Calu3 (cell line): ENCODE measurements at regions of chr14 and their contacts with region 1.

Region 1: DNA sequence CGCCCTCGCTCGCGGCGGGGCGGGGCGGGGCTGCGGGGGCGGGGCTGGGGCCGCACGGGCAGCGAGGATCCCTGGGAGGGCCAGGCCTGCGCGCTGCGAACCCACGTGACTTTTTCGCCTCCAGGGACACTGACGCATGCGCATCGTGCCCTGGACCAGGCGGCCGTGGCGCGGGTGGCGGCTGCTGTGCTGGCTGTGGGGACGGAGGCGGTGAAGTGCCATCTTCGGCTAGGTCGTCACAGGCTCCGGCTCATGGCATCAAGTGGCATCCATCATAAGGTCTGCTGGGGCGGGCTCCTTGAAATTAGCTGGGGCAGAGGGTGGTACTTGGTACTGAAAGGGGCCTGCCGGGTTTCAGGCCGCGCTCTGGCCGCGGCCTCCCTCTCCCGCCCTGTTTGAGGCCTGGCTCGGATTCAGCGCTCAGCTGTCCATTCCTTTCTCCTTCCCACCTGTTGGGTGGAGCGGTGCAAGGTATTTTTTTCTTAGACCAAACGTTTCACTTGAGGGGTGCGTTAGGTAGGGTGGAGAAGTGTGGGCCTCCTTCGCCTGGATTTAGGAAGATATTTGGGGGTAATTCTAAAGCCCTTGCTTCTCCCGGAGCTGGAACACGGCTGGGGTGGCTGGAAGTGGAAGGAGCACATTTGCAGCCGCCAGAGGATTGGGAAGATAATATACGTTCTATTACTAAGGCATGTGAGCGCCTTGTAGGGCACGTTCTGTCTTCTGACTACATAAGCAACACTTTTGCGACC is at the start of gene PRPF39:
- DNase-seq: peak; percentile 96
- H3K4me3 Mint-ChIP-seq: peak within 1 kb of the TSS; percentile 96
- H3K27ac Mint-ChIP-seq: peak within 1 kb of the TSS; percentile 87
- H3K4me1 Mint-ChIP-seq: peaks cover 34% of the 10 kb centered on the region
- H3K27me3 Mint-ChIP-seq: no peaks in the 10 kb centered on the region
- CTCF ChIP-seq: no peak
- total RNA-seq, gene PRPF39: 34.2 and 35.8 TPM in 2 replicates

Region 2: GRCh38 chr14:45072126-45072525 is 12.0 kb before region 1 on chr14:
- CTCF ChIA-PET with region 1: no interaction called
- intact Hi-C with region 1: loop called (anchors 1 kb)
- DNase-seq: no peak
- H3K4me3 Mint-ChIP-seq: no peak overlapping the region
- H3K27ac Mint-ChIP-seq: no peak overlapping the region
- H3K4me1 Mint-ChIP-seq: no peaks in the 10 kb centered on the region
- H3K27me3 Mint-ChIP-seq: no peaks in the 10 kb centered on the region
- CTCF ChIP-seq: no peak